ENCODE measurements at regions of chr21 and their contacts with region 1.

Region 1: DNA sequence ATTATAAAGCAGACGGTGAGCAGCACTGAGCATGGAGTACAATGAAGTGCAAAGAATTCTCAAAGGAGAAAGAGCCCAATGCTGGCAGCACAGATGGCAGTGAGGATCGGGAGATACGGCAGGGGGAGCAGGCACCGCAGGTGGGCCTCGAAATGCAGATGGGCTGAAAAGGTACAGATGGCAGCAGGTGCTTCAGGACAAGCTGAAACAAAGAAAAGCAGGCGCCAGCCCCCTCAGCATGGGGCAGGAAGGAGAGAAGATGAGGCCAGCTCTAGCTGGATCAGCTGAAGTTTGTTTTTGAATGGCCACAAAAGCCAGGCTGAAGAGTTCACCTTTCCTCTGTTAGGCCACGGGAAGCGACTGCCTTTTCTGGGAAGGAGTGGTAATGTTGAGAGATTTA is 7.7 kb downstream of the CFAP298 start:
- DNase-seq: peak in 1 of 2 donors; percentile 71
- H3K4me3 ChIP-seq: no peak overlapping the region
- CTCF ChIP-seq: no peak
- POLR2A ChIP-seq: no peak

Region 2: DNA sequence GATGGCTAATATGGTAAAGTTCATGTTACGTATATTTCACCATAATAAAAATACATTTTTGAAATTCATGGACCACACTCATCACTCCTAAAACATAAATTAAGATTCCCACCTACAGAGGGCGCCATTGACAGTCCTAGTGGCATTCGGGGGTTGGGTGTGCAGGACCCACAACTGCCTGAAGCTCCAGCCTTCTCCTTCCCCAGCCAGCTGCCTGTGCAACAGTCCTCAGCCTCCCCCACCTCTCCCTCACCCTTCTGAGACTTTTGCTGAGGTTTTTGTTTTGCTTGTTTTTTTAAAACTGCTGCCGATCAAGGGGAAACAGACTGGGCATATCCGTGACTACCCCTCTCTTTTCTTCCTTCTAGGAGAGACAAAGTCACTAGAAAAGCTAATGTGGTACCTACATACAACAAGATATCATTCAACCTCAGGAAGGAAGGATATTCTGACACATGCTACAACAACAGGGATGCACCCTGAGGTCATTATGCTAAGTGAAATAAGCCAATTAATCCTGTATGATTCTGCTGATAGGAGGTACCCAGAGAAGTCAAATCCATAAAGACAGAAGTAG is 201.2 kb before region 1 on chr21:
- intact Hi-C with region 1: loop called (anchors 10 kb)
- DNase-seq: peak in 1 of 2 donors; percentile 56
- H3K4me3 ChIP-seq: no peak overlapping the region
- CTCF ChIP-seq: peak in 1 of 3 donors; percentile 30
- POLR2A ChIP-seq: no peak

Region 3: GRCh38 chr21:32569261-32570230 is 34.9 kb before region 1 on chr21:
- intact Hi-C with region 1: no loop called
- DNase-seq: peak; percentile 62 to 95
- H3K4me3 ChIP-seq: peak overlapping the region; percentile 50
- CTCF ChIP-seq: peak in 1 of 3 donors; percentile 65
- POLR2A ChIP-seq: no peak

Region 4: GRCh38 chr21:33951276-33952178 is 1347.1 kb after region 1 on chr21:
- intact Hi-C with region 1: no loop called
- DNase-seq: no peak
- H3K4me3 ChIP-seq: no peak overlapping the region
- CTCF ChIP-seq: no peak
- POLR2A ChIP-seq: no peak